ENCODE measurements at regions of chrX and their contacts with region 1.

Region 1: DNA sequence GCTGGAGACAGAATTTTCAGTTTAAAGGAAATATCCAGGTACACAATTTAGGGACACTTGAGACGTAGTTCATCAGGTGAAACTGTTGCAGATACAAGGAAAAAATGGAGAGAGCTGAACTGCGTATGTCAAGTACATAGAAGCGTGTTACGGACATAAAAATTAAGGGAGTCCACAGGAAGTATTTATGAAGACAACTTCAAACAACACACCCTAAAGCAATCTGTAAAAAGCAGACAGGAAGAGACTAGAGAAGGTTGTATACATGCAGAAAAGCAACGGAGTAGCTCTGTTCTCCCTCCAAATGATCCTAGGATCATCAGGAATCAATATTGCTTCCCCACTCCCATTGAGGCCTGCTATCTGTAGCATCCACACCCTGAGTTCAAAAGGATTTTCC is 5.8 kb downstream of the CASK start:
- DNase-seq: peak in 1 of 5 donors; percentile 16
- H3K4me3 ChIP-seq: peak overlapping the region in 1 of 2 donors; percentile 38
- H3K4me3 Mint-ChIP-seq: peak overlapping the region; percentile 57 to 88 (median 78)
- H3K27ac ChIP-seq: peak overlapping the region; percentile 12
- H3K27ac Mint-ChIP-seq: peak overlapping the region; percentile 43 to 90 (median 84)
- H3K4me1 ChIP-seq: peaks cover 66% of the 10 kb centered on the region
- H3K4me1 Mint-ChIP-seq: peaks cover 29 to 80% (median 54%) of the 10 kb centered on the region in 4 donors
- H3K27me3 ChIP-seq: no peaks in the 10 kb centered on the region
- H3K27me3 Mint-ChIP-seq: no peaks in the 10 kb centered on the region

Region 2: DNA sequence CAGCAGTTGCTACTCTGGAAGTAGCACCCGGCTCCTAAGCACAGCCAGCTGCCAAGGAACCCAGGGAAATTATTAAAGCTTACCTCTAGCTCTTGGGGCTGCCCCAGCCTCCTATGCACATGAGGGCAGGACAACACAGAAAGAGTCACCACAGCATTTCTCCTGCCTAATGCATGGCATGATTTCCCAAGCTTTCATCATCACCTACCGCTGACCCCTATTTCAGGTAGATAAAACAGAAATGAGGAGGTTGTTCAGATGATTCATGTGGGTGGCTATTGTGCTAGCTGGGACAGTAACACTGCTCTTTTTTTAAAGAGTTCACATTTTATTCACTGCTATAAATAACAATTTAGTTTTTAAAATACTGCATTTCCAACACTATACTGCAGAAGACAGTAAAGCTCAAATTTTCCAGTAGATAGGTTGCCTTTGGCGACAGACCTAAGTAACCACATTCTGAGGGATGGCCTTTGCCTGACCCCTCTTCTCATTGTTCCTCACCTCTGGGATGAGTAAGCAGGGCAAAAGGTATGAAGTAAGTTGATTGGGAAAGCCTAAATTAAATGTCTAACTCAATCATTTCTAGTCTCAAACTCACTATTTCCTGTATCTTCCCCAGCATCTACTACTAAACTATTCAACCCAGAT is 10.9 kb before region 1 on chrX:
- CTCF ChIA-PET with region 1: no interaction called
- POLR2A ChIA-PET with region 1: interaction called, 11 read pairs
- intact Hi-C with region 1: loop called (anchors 2 kb)
- DNase-seq: no peak
- H3K4me3 ChIP-seq: no peak overlapping the region
- H3K4me3 Mint-ChIP-seq: peak overlapping the region in 1 of 8 donors; percentile 81
- H3K27ac ChIP-seq: no peak overlapping the region
- H3K27ac Mint-ChIP-seq: peak overlapping the region in 3 of 7 donors; percentile 5 to 75 (median 19)
- H3K4me1 ChIP-seq: peaks cover 42% of the 10 kb centered on the region
- H3K4me1 Mint-ChIP-seq: peaks cover 27 to 69% (median 49%) of the 10 kb centered on the region in 4 donors
- H3K27me3 ChIP-seq: no peaks in the 10 kb centered on the region
- H3K27me3 Mint-ChIP-seq: no peaks in the 10 kb centered on the region